ENCODE measurements at regions of chr3 and their contacts with region 1.

Region 1: DNA sequence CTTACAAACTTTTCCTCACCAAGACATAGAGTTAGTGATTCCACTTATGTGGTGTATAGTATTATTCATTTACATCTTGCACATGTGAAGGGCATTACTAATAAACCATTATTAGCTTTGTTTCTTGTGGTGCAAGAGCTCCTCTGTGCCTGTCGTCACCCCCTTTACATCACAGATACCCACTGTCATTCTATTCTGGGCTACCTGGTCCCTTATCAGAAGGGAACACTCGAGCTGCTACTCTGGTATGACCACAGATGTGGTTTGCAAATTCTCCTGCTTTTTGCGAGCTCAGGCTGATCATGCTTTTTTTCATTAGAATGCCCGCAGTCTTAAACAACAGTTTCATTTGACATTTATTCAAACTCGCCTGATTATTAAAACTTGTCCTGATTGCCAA is 13.9 kb upstream of the SENP2 start:
- DNase-seq: peak; percentile 74 to 91 (median 80)
- H3K4me3 ChIP-seq: no peak overlapping the region
- H3K27ac ChIP-seq: no peak overlapping the region
- H3K4me1 ChIP-seq: peaks cover 0 to 3% (median 0%) of the 10 kb centered on the region in 4 experiments
- H3K27me3 ChIP-seq: no peaks in the 10 kb centered on the region

Region 2: DNA sequence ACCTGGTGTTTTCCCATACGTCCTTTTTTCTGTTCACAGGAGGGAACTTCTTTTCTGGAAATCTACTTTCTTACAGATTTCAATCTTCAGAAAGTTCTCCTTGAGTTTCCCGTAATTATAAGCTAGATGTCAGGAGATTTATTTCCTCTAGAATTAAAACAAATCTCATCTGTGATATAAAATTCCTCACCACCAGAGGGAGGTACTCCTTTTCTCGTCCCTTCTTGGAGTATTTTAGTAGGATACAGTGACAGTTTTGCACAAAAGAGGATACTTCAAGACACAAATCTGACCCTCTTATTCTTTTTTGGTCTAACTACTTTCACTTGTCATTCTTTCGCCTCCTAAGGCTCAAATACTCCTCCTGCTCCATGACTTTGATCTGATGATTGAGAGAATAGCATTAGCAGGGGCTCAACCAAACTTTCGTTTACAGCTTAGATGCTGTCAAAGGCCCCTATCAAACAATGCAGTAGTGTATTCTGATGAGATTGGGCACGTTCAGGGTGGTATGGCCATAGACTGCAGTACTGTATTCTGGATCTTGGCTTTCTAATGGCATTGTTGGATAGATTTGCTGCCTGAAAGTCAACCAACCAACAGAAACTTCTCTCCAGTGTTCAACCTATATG is 111.3 kb before region 1 on chr3:
- CTCF ChIA-PET with region 1: interaction called, 10 read pairs
- POLR2A ChIA-PET with region 1: no interaction called
- DNase-seq: peak; percentile 31 to 44 (median 36)
- H3K4me3 ChIP-seq: no peak overlapping the region
- H3K27ac ChIP-seq: no peak overlapping the region
- H3K4me1 ChIP-seq: no peaks in the 10 kb centered on the region
- H3K27me3 ChIP-seq: no peaks in the 10 kb centered on the region

Region 3: GRCh38 chr3:185552358-185552877 is 19.8 kb before region 1 on chr3 and contains the start of gene LIPH:
- CTCF ChIA-PET with region 1: interaction called, 38 read pairs
- POLR2A ChIA-PET with region 1: no interaction called
- DNase-seq: peak in 1 of 3 donors; percentile 13
- H3K4me3 ChIP-seq: no peak within 1 kb of the TSS
- H3K27ac ChIP-seq: peak within 1 kb of the TSS in 1 of 2 experiments; percentile 1
- H3K4me1 ChIP-seq: peaks cover 0 to 2% (median 0%) of the 10 kb centered on the region in 4 experiments
- H3K27me3 ChIP-seq: no peaks in the 10 kb centered on the region

Region 4: GRCh38 chr3:185558395-185558794 is 13.8 kb before region 1 on chr3:
- CTCF ChIA-PET with region 1: interaction called, 38 read pairs
- POLR2A ChIA-PET with region 1: no interaction called
- DNase-seq: no peak
- H3K4me3 ChIP-seq: no peak overlapping the region
- H3K27ac ChIP-seq: peak overlapping the region in 1 of 2 experiments; percentile 43
- H3K4me1 ChIP-seq: peaks cover 4 to 21% (median 20%) of the 10 kb centered on the region in 4 experiments
- H3K27me3 ChIP-seq: no peaks in the 10 kb centered on the region

Region 5: GRCh38 chr3:185585859-185586685 is 13.9 kb after region 1 on chr3 and contains the start of gene SENP2:
- CTCF ChIA-PET with region 1: interaction called, 40 read pairs
- POLR2A ChIA-PET with region 1: no interaction called
- DNase-seq: peak; percentile 99 to 100 (median 100)
- H3K4me3 ChIP-seq: peak within 1 kb of the TSS; percentile 72 to 100 (median 98)
- H3K27ac ChIP-seq: peak within 1 kb of the TSS; percentile 82 to 94
- H3K4me1 ChIP-seq: peaks cover 7 to 33% (median 25%) of the 10 kb centered on the region in 4 experiments
- H3K27me3 ChIP-seq: no peaks in the 10 kb centered on the region

Region 6: DNA sequence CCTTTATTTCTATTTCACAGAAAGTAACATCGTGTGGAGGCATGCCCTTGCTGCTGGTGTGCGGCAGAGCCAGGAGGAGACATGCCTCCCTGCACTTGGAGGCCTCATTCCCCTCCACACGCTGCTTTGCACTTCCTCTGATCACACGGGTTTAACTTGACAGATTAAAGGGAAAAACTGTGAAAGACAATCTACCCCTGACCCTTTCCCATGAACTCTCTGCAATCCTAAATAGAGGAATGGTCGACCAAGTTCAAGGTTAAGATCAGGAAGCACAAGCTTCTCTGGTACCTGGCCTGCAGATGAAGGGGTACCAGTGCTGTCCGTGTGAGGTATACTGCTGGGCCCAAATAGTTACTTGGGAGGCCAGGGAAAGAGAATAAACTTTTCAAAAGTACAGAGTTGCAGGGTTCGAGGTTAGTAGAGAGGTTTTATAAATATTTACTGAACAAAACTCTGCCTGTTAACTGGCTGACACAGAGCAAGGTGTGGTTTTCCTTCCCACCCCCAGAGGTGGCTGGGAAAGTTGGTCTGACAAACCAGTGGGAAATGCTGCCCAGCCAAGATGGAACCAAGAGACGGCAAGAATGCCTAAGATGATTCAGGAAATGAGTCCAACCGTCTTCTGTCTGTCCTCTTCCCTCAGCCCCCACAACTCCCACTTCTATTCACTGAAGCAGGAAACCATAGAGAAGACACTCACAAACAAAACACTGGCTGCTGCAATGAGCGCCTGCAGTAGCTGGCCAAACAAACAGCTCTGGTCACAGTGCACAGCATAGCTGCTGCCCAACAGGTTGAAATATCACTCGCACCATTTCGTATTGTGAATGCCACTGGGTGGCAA is 173.0 kb after region 1 on chr3:
- CTCF ChIA-PET with region 1: no interaction called
- POLR2A ChIA-PET with region 1: no interaction called
- DNase-seq: peak in 1 of 3 donors; percentile 60
- H3K4me3 ChIP-seq: peak overlapping the region in 4 of 7 experiments; percentile 24 to 58 (median 42)
- H3K27ac ChIP-seq: peak overlapping the region; percentile 35 to 79
- H3K4me1 ChIP-seq: peaks cover 25 to 63% (median 51%) of the 10 kb centered on the region in 4 experiments
- H3K27me3 ChIP-seq: no peaks in the 10 kb centered on the region

Measured in common myeloid progenitor, CD34-positive (primary cell).